ENCODE measurements at regions of chr7 and their contacts with region 1.

Region 1: DNA sequence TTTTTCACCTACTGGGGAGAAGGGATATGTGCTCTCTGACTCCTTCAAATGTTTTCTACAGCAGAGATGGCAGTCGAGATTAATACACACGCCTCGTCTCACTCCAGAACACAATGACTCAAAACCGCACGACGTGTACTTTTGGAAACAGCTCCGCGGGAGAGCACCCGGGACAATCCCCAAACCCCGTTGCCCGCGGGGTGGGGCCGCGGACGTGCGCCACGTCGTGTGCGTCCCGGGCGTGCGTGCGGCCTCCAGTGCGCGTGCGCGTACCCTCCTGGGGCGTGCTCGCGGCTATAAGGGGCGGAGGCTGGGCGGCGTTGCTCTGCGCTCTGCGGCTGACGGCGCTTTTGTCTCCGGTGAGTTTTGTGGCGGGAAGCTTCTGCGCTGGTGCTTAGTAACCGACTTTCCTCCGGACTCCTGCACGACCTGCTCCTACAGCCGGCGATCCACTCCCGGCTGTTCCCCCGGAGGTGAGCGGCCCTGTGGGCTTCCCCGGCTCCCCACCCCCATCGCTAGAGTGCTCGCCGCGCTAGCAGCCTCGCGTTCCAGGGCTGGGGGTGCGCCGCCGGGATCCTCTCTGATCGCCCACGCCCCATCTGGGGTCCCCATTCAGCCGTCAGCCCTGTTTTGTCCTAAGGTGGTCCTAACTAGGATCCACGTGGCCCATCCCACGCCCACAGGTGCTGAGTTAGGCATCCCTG is at the start of gene HILPDA:
- DNase-seq: peak; percentile 74
- ATAC-seq: peak; percentile 96
- H3K4me3 ChIP-seq: peak within 1 kb of the TSS; percentile 82 to 96 (median 92)
- H3K27ac ChIP-seq: peak within 1 kb of the TSS; percentile 68
- H3K4me1 ChIP-seq: peaks cover 69% of the 10 kb centered on the region
- H3K27me3 ChIP-seq: peaks cover 0 to 3% of the 10 kb centered on the region in 2 experiments; a peak in 1 of 5 replicates
- CTCF ChIP-seq: peak; percentile 16; the same call in 1 of the 2 replicates
- EP300 ChIP-seq: peak in 1 of 2 experiments; percentile 56; a peak in 2 of 4 replicates
- POLR2A ChIP-seq: peak; percentile 89 to 96
- RAD21 ChIP-seq: no peak
- total RNA-seq, gene HILPDA: 8.6 and 11.1 TPM in 2 replicates

Region 2: GRCh38 chr7:128398016-128398840 is 57.5 kb before region 1 on chr7:
- CTCF ChIA-PET with region 1: interaction called, 13 read pairs
- POLR2A ChIA-PET with region 1: no interaction called
- in situ Hi-C with region 1: loop called (anchors 5 kb)
- intact Hi-C with region 1: loop called (anchors 1 kb)
- DNase-seq: no peak
- ATAC-seq: peak; percentile 84
- H3K4me3 ChIP-seq: peak overlapping the region in 1 of 3 experiments; percentile 17; a peak in 1 of 6 replicates
- H3K27ac ChIP-seq: peak overlapping the region; percentile 8
- H3K4me1 ChIP-seq: peaks cover 19% of the 10 kb centered on the region
- H3K27me3 ChIP-seq: no peaks in the 10 kb centered on the region
- CTCF ChIP-seq: peak; percentile 89
- EP300 ChIP-seq: no peak
- POLR2A ChIP-seq: no peak
- RAD21 ChIP-seq: peak; percentile 69

Region 3: GRCh38 chr7:128435327-128435686 is 20.4 kb before region 1 on chr7:
- CTCF ChIA-PET with region 1: interaction called, 140 read pairs
- POLR2A ChIA-PET with region 1: interaction called, 54 read pairs
- in situ Hi-C with region 1: no loop called
- intact Hi-C with region 1: no loop called
- DNase-seq: peak; percentile 65
- ATAC-seq: peak; percentile 67
- H3K4me3 ChIP-seq: no peak overlapping the region
- H3K27ac ChIP-seq: no peak overlapping the region
- H3K4me1 ChIP-seq: peaks cover 40% of the 10 kb centered on the region
- H3K27me3 ChIP-seq: peaks cover 2 to 10% of the 10 kb centered on the region in 2 experiments; a peak in 2 of 5 replicates
- CTCF ChIP-seq: no peak
- EP300 ChIP-seq: peak in 1 of 2 experiments; percentile 74; a peak in 2 of 4 replicates
- POLR2A ChIP-seq: no peak
- RAD21 ChIP-seq: no peak

Region 4: DNA sequence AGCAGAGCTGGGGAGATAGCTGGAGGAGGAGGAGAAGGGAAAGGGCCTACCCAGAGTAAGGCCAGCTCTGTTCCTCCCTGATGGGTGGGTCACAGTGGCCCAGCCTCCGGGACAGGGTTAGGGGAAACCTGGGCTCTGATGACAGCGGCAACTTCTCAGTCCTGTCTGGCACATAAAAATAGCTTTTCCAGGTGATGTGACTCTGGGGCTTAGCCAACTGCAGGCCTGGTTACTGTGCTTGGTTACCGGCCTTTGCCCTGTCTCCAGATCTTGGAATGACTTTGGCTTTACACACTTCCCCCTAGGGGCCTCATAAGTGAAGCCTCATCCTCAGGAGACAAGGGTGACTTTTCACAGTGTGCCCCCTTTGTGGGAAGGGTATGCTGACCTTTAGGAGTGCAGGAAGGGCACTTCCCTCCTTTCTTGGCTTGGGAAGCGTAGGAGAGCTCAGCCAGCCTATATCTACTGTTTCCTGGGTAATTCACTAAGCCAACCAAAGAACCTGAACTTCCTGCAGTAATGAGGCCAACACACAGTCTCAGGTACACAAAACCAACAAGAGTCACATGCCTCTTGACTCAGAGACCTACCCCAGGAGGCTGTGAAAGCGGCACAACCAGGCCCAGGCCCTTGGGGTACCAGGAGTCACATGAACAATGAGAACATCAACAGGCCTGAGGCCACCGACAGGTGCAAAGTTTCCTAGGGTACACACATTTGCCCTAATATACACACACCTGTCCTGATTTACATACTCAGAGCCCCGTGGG is 11.7 kb before region 1 on chr7:
- CTCF ChIA-PET with region 1: no interaction called
- POLR2A ChIA-PET with region 1: interaction called, 12 read pairs
- in situ Hi-C with region 1: no loop called
- intact Hi-C with region 1: no loop called
- DNase-seq: no peak
- ATAC-seq: peak; percentile 63
- H3K4me3 ChIP-seq: no peak overlapping the region
- H3K27ac ChIP-seq: no peak overlapping the region
- H3K4me1 ChIP-seq: peaks cover 21% of the 10 kb centered on the region
- H3K27me3 ChIP-seq: peaks cover 0 to 18% of the 10 kb centered on the region in 2 experiments; a peak in 3 of 5 replicates
- CTCF ChIP-seq: no peak
- EP300 ChIP-seq: no peak
- POLR2A ChIP-seq: no peak
- RAD21 ChIP-seq: no peak

Region 5: DNA sequence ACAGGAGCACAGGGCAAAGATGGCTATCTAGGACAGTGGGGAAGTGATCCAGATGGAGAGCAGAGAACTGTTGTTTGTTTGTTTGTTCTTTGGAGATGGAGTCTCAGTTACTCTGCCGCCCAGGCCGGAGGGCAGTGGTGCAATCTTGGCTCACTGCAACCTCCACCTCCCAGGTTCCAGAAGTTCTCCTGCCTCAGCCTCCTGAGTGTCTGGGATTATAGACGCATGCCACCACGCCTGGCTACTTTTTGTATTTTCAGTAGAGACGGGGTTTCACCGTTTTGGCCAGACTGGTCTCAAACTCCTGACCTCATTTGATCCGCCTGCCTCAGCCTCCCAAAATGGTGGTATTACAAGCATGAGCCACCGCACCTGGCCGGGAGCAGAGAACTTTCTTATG is 41.7 kb after region 1 on chr7:
- CTCF ChIA-PET with region 1: no interaction called
- POLR2A ChIA-PET with region 1: no interaction called
- in situ Hi-C with region 1: no loop called
- intact Hi-C with region 1: no loop called
- DNase-seq: no peak
- ATAC-seq: no peak
- H3K4me3 ChIP-seq: no peak overlapping the region
- H3K27ac ChIP-seq: no peak overlapping the region
- H3K4me1 ChIP-seq: no peaks in the 10 kb centered on the region
- H3K27me3 ChIP-seq: no peaks in the 10 kb centered on the region
- CTCF ChIP-seq: no peak
- EP300 ChIP-seq: no peak
- POLR2A ChIP-seq: no peak
- RAD21 ChIP-seq: no peak

Region 6: DNA sequence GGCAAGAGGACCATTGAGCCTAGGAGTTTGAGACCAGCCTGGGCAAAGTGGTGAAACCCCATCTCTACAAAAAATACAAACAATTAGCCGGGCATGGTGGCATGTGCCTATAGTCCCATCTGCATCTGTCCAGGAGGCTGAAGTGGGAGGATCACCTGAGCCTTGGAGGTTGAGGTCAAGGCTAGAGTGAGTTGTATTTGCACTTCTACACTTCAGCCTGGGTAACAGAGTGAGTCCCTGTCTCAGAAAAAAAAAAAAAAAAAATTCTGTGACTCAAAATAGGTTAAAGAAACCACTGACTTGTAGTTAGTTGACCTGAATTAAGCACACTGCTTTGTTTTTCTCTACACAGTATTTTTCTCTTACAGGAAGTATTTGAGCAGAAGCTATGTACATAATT is 95.2 kb after region 1 on chr7:
- CTCF ChIA-PET with region 1: no interaction called
- POLR2A ChIA-PET with region 1: no interaction called
- in situ Hi-C with region 1: no loop called
- intact Hi-C with region 1: no loop called
- DNase-seq: no peak
- ATAC-seq: no peak; the same call in 2 of the 3 replicates
- H3K4me3 ChIP-seq: no peak overlapping the region
- H3K27ac ChIP-seq: no peak overlapping the region
- H3K4me1 ChIP-seq: no peaks in the 10 kb centered on the region; the same call in 1 of the 2 replicates
- H3K27me3 ChIP-seq: no peaks in the 10 kb centered on the region
- CTCF ChIP-seq: no peak
- EP300 ChIP-seq: no peak
- POLR2A ChIP-seq: no peak
- RAD21 ChIP-seq: no peak

Region 7: DNA sequence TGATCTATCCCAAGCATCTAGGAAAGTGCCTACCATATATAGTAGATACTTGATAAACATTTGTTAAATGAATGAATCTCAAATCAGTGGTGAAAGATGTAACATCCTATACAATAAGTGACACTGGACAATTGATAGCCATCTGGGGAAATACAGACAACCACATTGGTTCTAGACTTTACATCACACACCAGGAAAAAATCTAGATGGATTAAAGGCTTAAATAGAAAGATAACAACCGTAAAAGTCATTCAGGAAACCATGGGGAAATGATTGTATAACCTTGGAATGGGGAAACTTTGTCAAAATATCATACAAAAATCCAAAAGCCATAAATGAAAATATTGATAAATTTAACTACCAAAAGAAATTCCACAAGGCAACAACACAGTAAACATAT is 209.4 kb after region 1 on chr7:
- CTCF ChIA-PET with region 1: no interaction called
- POLR2A ChIA-PET with region 1: no interaction called
- in situ Hi-C with region 1: no loop called
- intact Hi-C with region 1: no loop called
- DNase-seq: no peak
- ATAC-seq: no peak
- H3K4me3 ChIP-seq: no peak overlapping the region
- H3K27ac ChIP-seq: no peak overlapping the region
- H3K4me1 ChIP-seq: no peaks in the 10 kb centered on the region
- H3K27me3 ChIP-seq: no peaks in the 10 kb centered on the region
- CTCF ChIP-seq: no peak
- EP300 ChIP-seq: no peak
- POLR2A ChIP-seq: no peak
- RAD21 ChIP-seq: no peak

Region 8: GRCh38 chr7:128743112-128743772 is 287.5 kb after region 1 on chr7:
- CTCF ChIA-PET with region 1: no interaction called
- POLR2A ChIA-PET with region 1: no interaction called
- in situ Hi-C with region 1: no loop called
- intact Hi-C with region 1: no loop called
- DNase-seq: no peak
- ATAC-seq: no peak
- H3K4me3 ChIP-seq: no peak overlapping the region
- H3K27ac ChIP-seq: no peak overlapping the region
- H3K4me1 ChIP-seq: peaks cover 79% of the 10 kb centered on the region
- H3K27me3 ChIP-seq: peaks cover 0 to 3% of the 10 kb centered on the region in 2 experiments; a peak in 1 of 5 replicates
- CTCF ChIP-seq: no peak
- EP300 ChIP-seq: no peak
- POLR2A ChIP-seq: no peak
- RAD21 ChIP-seq: no peak

Measured in HepG2 (cell line).